Right ventricle myocardium inferior (tissue), 1 donor: ENCODE measurements at regions of chr15 and their contacts with region 1.

Region 1: GRCh38 chr15:99507504-99508310 is 58.1 kb upstream of the MEF2A start:
- DNase-seq: peak; percentile 85
- ATAC-seq: peak; percentile 86

Region 2: DNA sequence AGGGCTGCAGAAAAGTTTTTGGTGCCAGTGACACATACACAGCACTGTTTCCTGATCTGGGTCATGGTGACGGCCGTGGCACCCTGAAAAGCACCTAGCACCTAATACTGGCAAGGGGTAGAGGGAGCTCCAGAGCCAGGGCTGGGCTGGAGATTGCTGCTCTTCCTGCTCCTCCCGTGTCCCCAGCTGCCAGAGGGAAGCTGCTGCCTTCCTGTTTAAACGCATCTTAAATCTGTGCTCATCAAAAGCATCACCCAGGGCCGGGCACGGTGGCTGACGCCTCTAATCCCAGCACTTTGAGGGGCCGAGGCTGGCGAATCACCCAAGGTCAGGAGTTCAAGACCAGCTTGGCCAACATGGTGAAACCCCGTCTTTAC is 98.6 kb before region 1 on chr15:
- intact Hi-C with region 1: loop called (anchors 5 kb)
- DNase-seq: no peak
- ATAC-seq: peak; percentile 86

Region 3: DNA sequence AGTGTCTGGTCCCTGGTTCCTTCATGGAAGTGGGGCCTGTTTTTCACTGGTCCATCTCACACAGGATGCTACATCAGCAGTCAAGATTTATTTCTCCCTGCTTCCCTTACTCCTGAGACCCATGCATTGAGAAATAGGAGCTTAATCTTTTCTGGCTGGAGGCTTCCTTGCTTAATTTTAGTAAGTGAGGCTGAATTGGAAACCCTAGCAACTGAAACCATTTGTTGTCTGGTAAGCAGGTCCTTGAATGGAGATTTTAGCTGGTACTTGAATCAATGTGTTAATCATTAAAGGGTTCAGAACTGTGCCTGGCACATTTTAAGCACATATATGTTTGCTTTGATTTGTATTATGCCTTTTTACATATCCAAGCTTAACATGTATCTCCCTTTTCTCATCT is 37.9 kb after region 1 on chr15:
- intact Hi-C with region 1: loop called (anchors 5 kb)
- DNase-seq: no peak
- ATAC-seq: no peak